ENCODE measurements at regions of chr13 and their contacts with region 1.

Region 1: GRCh38 chr13:50801087-50801931 is 42.2 kb downstream of the DLEU7 start:
- DNase-seq: peak; percentile 91
- H3K4me3 Mint-ChIP-seq: no peak overlapping the region
- H3K27ac Mint-ChIP-seq: no peak overlapping the region
- H3K4me1 Mint-ChIP-seq: peaks cover 18% of the 10 kb centered on the region
- H3K27me3 Mint-ChIP-seq: no peaks in the 10 kb centered on the region

Region 2: GRCh38 chr13:49976314-49977258 is 824.7 kb before region 1 on chr13:
- intact Hi-C with region 1: loop called (anchors 1 kb)
- DNase-seq: peak; percentile 91
- H3K4me3 Mint-ChIP-seq: no peak overlapping the region
- H3K27ac Mint-ChIP-seq: no peak overlapping the region
- H3K4me1 Mint-ChIP-seq: peaks cover 6% of the 10 kb centered on the region
- H3K27me3 Mint-ChIP-seq: no peaks in the 10 kb centered on the region

Region 3: GRCh38 chr13:50244713-50245574 is 556.4 kb before region 1 on chr13:
- intact Hi-C with region 1: loop called (anchors 10 kb)
- DNase-seq: peak; percentile 78
- H3K4me3 Mint-ChIP-seq: peak overlapping the region; percentile 41
- H3K27ac Mint-ChIP-seq: peak overlapping the region; percentile 73
- H3K4me1 Mint-ChIP-seq: peaks cover 34% of the 10 kb centered on the region
- H3K27me3 Mint-ChIP-seq: peaks cover 33% of the 10 kb centered on the region

Region 4: GRCh38 chr13:50268500-50268899 is 532.8 kb before region 1 on chr13:
- intact Hi-C with region 1: no loop called
- DNase-seq: no peak
- H3K4me3 Mint-ChIP-seq: no peak overlapping the region
- H3K27ac Mint-ChIP-seq: no peak overlapping the region
- H3K4me1 Mint-ChIP-seq: no peaks in the 10 kb centered on the region
- H3K27me3 Mint-ChIP-seq: peaks cover 45% of the 10 kb centered on the region

Region 5: GRCh38 chr13:50529154-50529882 is 272.0 kb before region 1 on chr13:
- intact Hi-C with region 1: loop called (anchors 5 kb)
- DNase-seq: peak; percentile 70
- H3K4me3 Mint-ChIP-seq: peak overlapping the region; percentile 8
- H3K27ac Mint-ChIP-seq: peak overlapping the region; percentile 66
- H3K4me1 Mint-ChIP-seq: peaks cover 34% of the 10 kb centered on the region
- H3K27me3 Mint-ChIP-seq: peaks cover 21% of the 10 kb centered on the region

Region 6: GRCh38 chr13:50594276-50595051 is 206.8 kb before region 1 on chr13:
- intact Hi-C with region 1: loop called (anchors 5 kb)
- DNase-seq: peak; percentile 71
- H3K4me3 Mint-ChIP-seq: peak overlapping the region; percentile 62
- H3K27ac Mint-ChIP-seq: peak overlapping the region; percentile 82
- H3K4me1 Mint-ChIP-seq: peaks cover 34% of the 10 kb centered on the region
- H3K27me3 Mint-ChIP-seq: peaks cover 3% of the 10 kb centered on the region

Region 7: DNA sequence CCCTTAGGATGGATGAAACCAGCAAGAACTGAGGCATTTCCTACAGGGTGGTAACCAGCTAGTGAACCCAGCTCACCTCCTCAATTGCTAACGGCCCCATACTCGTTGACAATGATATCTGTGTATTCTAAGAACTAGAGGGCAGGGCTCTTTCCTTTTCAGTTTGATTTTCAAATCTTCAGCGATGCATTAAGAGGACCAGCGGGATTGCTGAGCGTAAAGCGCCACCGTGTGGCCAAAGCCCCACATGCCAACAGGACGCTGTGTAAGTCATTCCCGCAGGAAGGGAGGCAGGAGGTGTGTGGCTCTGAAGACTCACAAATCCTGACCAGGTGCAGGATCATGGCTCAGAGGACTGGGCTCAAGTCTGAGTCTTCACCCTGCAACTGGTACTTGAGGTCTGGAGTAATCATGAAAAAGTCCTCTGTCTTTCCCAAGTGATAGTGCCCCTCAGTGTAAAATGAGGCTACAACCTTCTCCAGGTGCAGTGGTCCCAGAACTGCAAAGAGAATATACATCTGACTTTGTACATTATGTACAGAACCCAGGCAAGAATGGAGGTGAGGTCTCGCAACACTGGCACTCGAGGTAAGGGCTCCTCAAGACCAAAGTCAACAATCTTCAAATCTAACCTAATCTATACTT is 268.8 kb after region 1 on chr13:
- intact Hi-C with region 1: loop called (anchors 10 kb)
- DNase-seq: peak; percentile 94
- H3K4me3 Mint-ChIP-seq: no peak overlapping the region
- H3K27ac Mint-ChIP-seq: no peak overlapping the region
- H3K4me1 Mint-ChIP-seq: peaks cover 18% of the 10 kb centered on the region
- H3K27me3 Mint-ChIP-seq: peaks cover 23% of the 10 kb centered on the region